A673 (cell line): ENCODE measurements at regions of chr4 and their contacts with region 1.

Region 1: DNA sequence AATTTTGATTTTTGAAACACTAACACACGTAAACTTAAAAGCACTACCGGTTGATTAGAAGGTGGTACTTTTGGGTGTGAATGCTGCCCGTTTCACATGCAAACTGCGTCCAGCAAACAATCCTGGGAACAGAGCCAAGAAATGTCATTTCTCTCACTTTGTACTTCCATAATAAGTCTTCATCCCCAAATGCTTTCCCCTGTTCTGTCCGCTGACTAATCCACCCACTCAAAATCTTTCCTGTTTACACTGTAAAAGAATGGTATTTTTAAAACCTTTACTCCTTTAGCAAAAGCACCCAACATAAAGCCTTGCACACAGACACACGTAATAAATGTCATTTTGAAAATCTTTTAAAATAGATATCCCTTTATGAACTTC is 39.1 kb upstream of the PDLIM5 start:
- DNase-seq: peak; percentile 89
- H3K4me3 ChIP-seq: peak overlapping the region; percentile 21
- H3K27ac ChIP-seq: peak overlapping the region; percentile 100
- H3K4me1 ChIP-seq: peaks cover 63% of the 10 kb centered on the region
- H3K27me3 ChIP-seq: no peaks in the 10 kb centered on the region
- CTCF ChIP-seq: no peak

Region 2: DNA sequence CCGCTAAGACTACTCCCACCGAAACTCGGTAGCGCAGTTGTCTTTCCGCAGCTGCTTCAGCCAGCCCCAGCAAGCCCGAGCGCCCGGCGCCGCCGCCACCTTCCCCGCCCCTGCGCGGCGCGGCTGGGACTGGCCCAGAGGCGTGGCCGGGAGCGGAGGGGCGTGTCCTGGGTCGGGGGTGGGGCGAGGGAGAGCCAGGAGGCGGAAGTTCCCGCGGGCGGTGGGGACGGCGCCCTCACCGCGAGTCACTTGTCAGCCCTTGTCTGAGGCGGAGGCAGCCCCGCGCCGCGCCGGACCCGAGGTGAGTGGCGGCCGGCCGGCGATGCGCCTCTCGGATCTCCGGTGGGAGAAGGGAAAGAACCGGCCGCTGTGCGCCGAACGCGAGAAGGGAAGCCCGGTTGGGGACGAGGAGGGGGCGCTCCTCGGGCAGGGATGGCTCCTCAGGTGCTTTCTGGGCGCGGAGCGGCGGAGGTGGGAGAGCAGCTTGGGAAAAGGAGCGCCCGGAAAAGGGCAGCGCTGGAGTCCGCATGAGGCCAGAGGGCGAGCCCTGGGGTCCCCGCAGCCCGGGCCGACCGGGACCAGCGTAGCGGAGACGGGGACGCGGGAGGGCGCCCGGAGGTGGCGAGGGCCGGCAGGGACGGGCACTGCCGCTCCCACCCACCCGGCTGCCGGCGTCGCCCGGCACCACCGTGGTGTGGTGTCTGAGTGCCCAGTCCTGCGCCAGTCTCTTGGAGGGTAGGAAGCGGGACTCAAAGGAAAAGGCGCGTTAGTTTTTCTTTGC is 39.2 kb after region 1 on chr4 and contains the start of gene PDLIM5:
- CTCF ChIA-PET with region 1: no interaction called
- POLR2A ChIA-PET with region 1: interaction called, 5 read pairs
- intact Hi-C with region 1: loop called (anchors 2 kb)
- DNase-seq: peak; percentile 88
- H3K4me3 ChIP-seq: peak within 1 kb of the TSS; percentile 82
- H3K27ac ChIP-seq: peak within 1 kb of the TSS; percentile 94
- H3K4me1 ChIP-seq: peaks cover 28% of the 10 kb centered on the region
- H3K27me3 ChIP-seq: no peaks in the 10 kb centered on the region
- CTCF ChIP-seq: no peak
- total RNA-seq, gene PDLIM5: 174 and 183 TPM in 2 replicates

Region 3: DNA sequence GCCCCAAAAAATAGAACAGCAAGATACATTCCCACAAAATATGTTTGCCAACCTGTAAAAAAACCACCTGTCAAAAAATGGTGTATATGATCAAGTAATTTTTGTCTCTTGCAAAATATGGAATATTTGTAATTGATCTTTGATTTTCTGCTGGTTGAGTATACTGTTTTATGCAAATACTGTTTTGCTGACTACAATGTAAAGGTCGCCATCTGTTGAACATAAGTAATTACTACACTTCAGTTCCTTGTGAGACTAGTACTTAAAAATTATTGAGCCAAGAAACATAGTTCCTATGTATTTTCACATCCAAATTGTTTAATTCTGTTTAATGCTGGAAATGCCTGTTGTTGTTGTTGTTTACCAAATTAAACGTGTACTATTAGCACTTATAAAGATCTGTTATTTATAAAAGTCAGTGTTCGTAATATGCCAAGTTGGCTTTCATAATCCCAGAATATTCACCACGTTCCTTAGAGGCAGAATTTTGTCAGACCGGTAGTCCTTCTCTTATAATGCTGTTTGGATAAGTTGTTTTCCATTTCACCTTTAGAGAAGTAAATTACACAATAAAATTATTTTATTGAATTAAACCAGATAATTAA is 183.3 kb after region 1 on chr4:
- CTCF ChIA-PET with region 1: no interaction called
- POLR2A ChIA-PET with region 1: no interaction called
- intact Hi-C with region 1: loop called (anchors 2 kb)
- DNase-seq: peak; percentile 61
- H3K4me3 ChIP-seq: no peak overlapping the region
- H3K27ac ChIP-seq: peak overlapping the region; percentile 62
- H3K4me1 ChIP-seq: peaks cover 21% of the 10 kb centered on the region
- H3K27me3 ChIP-seq: no peaks in the 10 kb centered on the region
- CTCF ChIP-seq: peak; percentile 51

Region 4: GRCh38 chr4:94695384-94695783 is 282.7 kb after region 1 on chr4:
- CTCF ChIA-PET with region 1: no interaction called
- POLR2A ChIA-PET with region 1: no interaction called
- intact Hi-C with region 1: no loop called
- DNase-seq: no peak
- H3K4me3 ChIP-seq: no peak overlapping the region
- H3K27ac ChIP-seq: no peak overlapping the region
- H3K4me1 ChIP-seq: peaks cover 8% of the 10 kb centered on the region
- H3K27me3 ChIP-seq: no peaks in the 10 kb centered on the region
- CTCF ChIP-seq: no peak

Region 5: GRCh38 chr4:94732358-94732698 is 319.7 kb after region 1 on chr4:
- CTCF ChIA-PET with region 1: no interaction called
- POLR2A ChIA-PET with region 1: no interaction called
- intact Hi-C with region 1: loop called (anchors 2 kb)
- DNase-seq: no peak
- H3K4me3 ChIP-seq: no peak overlapping the region
- H3K27ac ChIP-seq: no peak overlapping the region
- H3K4me1 ChIP-seq: peaks cover 20% of the 10 kb centered on the region
- H3K27me3 ChIP-seq: no peaks in the 10 kb centered on the region
- CTCF ChIP-seq: no peak

Region 6: DNA sequence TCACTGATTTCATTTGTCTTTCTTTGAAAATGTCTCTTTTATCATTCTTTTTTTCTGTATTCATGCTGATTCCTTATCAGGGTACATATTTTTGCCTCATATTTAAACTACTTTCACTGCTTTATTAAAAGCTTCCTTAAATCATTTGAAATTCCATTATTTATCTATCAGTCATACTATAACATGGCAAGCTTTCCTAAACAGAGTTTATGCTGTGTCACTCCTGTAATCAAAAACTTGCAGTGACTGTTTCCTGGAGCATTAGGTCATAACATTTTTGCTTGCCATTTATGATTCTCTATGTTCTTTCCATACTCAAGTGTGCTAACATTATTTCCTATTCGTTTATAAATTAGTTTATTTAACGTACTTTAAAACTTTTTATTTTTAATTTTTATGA is 548.8 kb after region 1 on chr4:
- CTCF ChIA-PET with region 1: no interaction called
- POLR2A ChIA-PET with region 1: no interaction called
- intact Hi-C with region 1: loop called (anchors 5 kb)
- DNase-seq: peak; percentile 14
- H3K4me3 ChIP-seq: no peak overlapping the region
- H3K27ac ChIP-seq: no peak overlapping the region
- H3K4me1 ChIP-seq: no peaks in the 10 kb centered on the region
- H3K27me3 ChIP-seq: no peaks in the 10 kb centered on the region
- CTCF ChIP-seq: no peak

Region 7: GRCh38 chr4:95087657-95088455 is 675.2 kb after region 1 on chr4:
- CTCF ChIA-PET with region 1: no interaction called
- POLR2A ChIA-PET with region 1: no interaction called
- intact Hi-C with region 1: loop called (anchors 10 kb)
- DNase-seq: peak; percentile 36
- H3K4me3 ChIP-seq: no peak overlapping the region
- H3K27ac ChIP-seq: no peak overlapping the region
- H3K4me1 ChIP-seq: peaks cover 11% of the 10 kb centered on the region
- H3K27me3 ChIP-seq: no peaks in the 10 kb centered on the region
- CTCF ChIP-seq: no peak

Region 8: GRCh38 chr4:95549246-95550114 is 1136.8 kb after region 1 on chr4:
- CTCF ChIA-PET with region 1: no interaction called
- POLR2A ChIA-PET with region 1: no interaction called
- intact Hi-C with region 1: loop called (anchors 10 kb)
- DNase-seq: no peak
- H3K4me3 ChIP-seq: peak overlapping the region; percentile 50
- H3K27ac ChIP-seq: no peak overlapping the region
- H3K4me1 ChIP-seq: peaks cover 34% of the 10 kb centered on the region
- H3K27me3 ChIP-seq: peaks cover 25% of the 10 kb centered on the region
- CTCF ChIP-seq: no peak